ENCODE measurements at regions of chr22 and their contacts with region 1.

Region 1: GRCh38 chr22:32444068-32444467 is 20.2 kb downstream of the BPIFC start:
- DNase-seq: peak; percentile 37
- ATAC-seq: peak; percentile 82
- H3K4me3 ChIP-seq: no peak overlapping the region
- H3K27ac ChIP-seq: no peak overlapping the region
- H3K4me1 ChIP-seq: no peaks in the 10 kb centered on the region
- H3K27me3 ChIP-seq: peaks cover 0 to 28% of the 10 kb centered on the region in 2 experiments; a peak in 3 of 5 replicates
- CTCF ChIP-seq: peak; percentile 77
- EP300 ChIP-seq: no peak
- POLR2A ChIP-seq: no peak
- RAD21 ChIP-seq: no peak; the same call in 1 of the 2 replicates

Region 2: GRCh38 chr22:32103658-32104315 is 340.3 kb before region 1 on chr22:
- CTCF ChIA-PET with region 1: no interaction called
- POLR2A ChIA-PET with region 1: no interaction called
- in situ Hi-C with region 1: no loop called
- intact Hi-C with region 1: loop called (anchors 2 kb)
- DNase-seq: no peak
- ATAC-seq: no peak
- H3K4me3 ChIP-seq: no peak overlapping the region
- H3K27ac ChIP-seq: no peak overlapping the region
- H3K4me1 ChIP-seq: no peaks in the 10 kb centered on the region
- H3K27me3 ChIP-seq: no peaks in the 10 kb centered on the region
- CTCF ChIP-seq: peak; percentile 32; the same call in 1 of the 2 replicates
- EP300 ChIP-seq: no peak
- POLR2A ChIP-seq: no peak
- RAD21 ChIP-seq: no peak

Region 3: GRCh38 chr22:32348031-32348611 is 95.9 kb before region 1 on chr22:
- CTCF ChIA-PET with region 1: no interaction called
- POLR2A ChIA-PET with region 1: no interaction called
- in situ Hi-C with region 1: no loop called
- intact Hi-C with region 1: no loop called
- DNase-seq: no peak
- ATAC-seq: no peak
- H3K4me3 ChIP-seq: no peak overlapping the region
- H3K27ac ChIP-seq: no peak overlapping the region
- H3K4me1 ChIP-seq: no peaks in the 10 kb centered on the region
- H3K27me3 ChIP-seq: peaks cover 0 to 2% of the 10 kb centered on the region in 2 experiments; a peak in 1 of 5 replicates
- CTCF ChIP-seq: no peak
- EP300 ChIP-seq: no peak
- POLR2A ChIP-seq: no peak
- RAD21 ChIP-seq: no peak

Region 4: DNA sequence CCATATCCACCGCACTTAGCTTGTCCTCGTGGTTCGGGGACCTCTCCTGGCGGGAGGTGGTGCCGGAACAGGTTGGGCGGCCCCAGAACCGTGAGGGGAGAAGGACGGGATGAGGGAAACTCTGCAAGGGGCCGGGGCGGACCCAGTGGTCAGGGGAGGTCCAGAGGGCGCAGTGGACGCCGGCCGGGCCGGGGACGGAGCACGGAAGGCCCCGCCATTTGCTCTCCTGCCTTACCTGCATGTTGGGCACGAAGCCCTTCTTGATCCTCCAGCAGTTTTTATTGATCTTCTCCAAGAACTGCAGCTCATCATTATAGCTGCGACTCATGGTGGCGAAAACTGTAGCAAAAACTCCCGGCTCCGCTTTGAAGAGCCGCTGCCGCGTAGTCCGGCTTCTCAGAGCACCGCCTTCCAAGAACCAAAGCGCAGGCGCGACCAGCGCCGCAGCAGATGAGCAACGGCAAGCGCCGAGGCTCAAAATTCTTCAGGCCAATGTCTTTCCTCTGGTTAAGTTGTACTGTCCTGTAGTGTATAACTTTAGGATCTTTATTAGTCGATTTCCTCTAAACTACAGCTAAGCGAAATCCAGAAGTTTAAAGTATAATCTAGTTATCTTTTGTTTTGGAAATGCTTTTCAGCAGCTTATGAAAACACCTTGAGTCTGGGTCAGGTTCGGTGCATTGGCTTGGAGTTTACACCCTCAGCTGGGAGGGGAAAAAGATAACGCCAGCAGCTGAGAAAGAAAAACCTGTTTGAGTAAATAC is 32.1 kb before region 1 on chr22 and contains the start of gene RTCB:
- CTCF ChIA-PET with region 1: interaction called, 3 read pairs
- POLR2A ChIA-PET with region 1: no interaction called
- in situ Hi-C with region 1: no loop called
- intact Hi-C with region 1: loop called (anchors 2 kb)
- DNase-seq: peak; percentile 83
- ATAC-seq: peak; percentile 88
- H3K4me3 ChIP-seq: peak within 1 kb of the TSS; percentile 85 to 94 (median 88)
- H3K27ac ChIP-seq: peak within 1 kb of the TSS; percentile 83
- H3K4me1 ChIP-seq: peaks cover 38% of the 10 kb centered on the region
- H3K27me3 ChIP-seq: peaks cover 2 to 8% of the 10 kb centered on the region in 2 experiments; a peak in 2 of 5 replicates
- CTCF ChIP-seq: 0 out of 2 replicates have a peak, but pooled peaks have one; percentile 26
- EP300 ChIP-seq: no peak
- POLR2A ChIP-seq: peak; percentile 67 to 87
- RAD21 ChIP-seq: no peak
- total RNA-seq, gene RTCB: 167 and 227 TPM in 2 replicates

Region 5: DNA sequence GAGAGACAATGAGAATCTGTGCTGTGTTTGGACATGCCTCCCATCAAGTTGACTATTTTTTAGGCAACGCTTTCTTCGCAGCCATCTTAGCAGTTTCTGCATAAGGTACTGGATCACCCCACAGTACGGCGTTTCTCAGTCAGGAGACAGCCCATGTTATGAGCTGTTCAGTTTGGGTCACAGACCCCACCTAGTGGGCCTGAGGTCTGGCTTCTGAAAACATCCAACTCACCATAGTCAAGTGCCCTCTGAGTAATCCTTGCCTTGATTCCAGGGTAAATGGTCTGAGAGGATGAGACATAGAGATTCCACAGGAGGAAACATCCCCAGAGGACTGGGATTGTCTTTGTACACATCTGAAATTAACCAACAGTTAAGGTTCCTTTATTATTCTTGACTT is 13.0 kb after region 1 on chr22:
- CTCF ChIA-PET with region 1: no interaction called
- POLR2A ChIA-PET with region 1: no interaction called
- in situ Hi-C with region 1: no loop called
- intact Hi-C with region 1: no loop called
- DNase-seq: no peak
- ATAC-seq: no peak
- H3K4me3 ChIP-seq: no peak overlapping the region
- H3K27ac ChIP-seq: no peak overlapping the region
- H3K4me1 ChIP-seq: no peaks in the 10 kb centered on the region
- H3K27me3 ChIP-seq: peaks cover 0 to 14% of the 10 kb centered on the region in 2 experiments; a peak in 3 of 5 replicates
- CTCF ChIP-seq: no peak
- EP300 ChIP-seq: no peak
- POLR2A ChIP-seq: no peak
- RAD21 ChIP-seq: no peak

Region 6: DNA sequence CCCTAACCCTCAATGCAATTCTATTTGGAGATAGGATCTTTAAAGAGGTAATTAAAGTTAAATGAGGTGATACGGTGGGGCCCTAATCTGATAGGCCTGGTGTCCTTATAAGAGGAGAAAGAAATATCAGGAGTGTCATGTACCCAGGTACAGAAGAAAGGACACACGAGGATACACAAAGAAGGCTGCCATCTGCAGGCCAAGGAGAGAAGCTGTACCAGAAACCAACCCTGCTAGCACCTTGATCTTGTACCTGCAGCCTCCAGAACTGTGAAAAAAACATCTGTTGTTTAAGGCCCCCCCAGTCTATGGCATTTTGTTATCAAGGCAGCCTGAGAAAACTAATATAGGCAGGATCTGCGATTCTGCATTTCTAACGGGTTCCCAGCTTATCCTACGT is 74.8 kb after region 1 on chr22:
- CTCF ChIA-PET with region 1: no interaction called
- POLR2A ChIA-PET with region 1: no interaction called
- in situ Hi-C with region 1: no loop called
- intact Hi-C with region 1: no loop called
- DNase-seq: no peak
- ATAC-seq: no peak
- H3K4me3 ChIP-seq: no peak overlapping the region
- H3K27ac ChIP-seq: no peak overlapping the region
- H3K4me1 ChIP-seq: peaks cover 7% of the 10 kb centered on the region
- H3K27me3 ChIP-seq: no peaks in the 10 kb centered on the region
- CTCF ChIP-seq: peak; percentile 61
- EP300 ChIP-seq: no peak
- POLR2A ChIP-seq: no peak
- RAD21 ChIP-seq: no peak